Head of caudate nucleus (tissue), 42 donors: ENCODE measurements at regions of chr15 and their contacts with region 1.

Region 1: DNA sequence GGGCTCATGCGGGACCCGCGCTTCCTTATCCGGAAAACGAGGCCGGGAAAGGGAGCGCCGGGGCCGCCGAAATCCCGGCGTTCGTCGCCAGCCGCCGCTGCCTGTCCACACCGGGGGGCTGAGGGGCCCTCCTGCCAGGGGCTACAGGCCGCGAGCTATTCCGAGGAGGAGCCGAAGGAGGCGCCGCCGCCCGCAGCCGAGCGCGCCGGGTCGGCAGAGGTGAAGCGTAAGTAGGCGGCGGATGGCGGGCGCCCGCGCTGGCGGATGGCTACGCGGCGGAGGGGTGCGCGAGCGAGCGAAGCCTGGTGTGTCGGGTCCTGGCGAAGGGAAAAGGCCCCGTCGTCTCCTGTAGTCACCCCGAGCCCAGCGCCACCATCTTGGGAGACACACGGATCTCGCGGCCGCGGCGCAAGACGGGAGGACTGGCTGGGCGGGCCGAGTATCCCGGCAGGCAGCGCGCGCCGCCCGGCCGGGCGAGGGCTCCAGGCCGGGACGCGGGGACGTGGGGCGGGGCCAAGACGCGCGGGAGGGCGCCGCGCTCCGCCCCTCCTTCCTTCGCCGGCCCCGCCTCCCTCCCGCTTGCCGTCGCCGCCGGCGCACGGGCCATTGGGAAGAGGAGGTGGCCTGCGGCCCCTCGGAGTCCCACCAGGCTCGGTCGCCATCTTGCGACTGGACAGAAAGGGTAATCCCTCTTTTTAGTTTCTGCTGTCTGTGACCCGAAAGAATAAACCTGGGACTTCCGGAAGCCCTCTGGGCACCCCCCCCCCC is at the start of gene UBE3A:
- DNase-seq: peak; percentile 68 to 97 (median 92)

Region 2: DNA sequence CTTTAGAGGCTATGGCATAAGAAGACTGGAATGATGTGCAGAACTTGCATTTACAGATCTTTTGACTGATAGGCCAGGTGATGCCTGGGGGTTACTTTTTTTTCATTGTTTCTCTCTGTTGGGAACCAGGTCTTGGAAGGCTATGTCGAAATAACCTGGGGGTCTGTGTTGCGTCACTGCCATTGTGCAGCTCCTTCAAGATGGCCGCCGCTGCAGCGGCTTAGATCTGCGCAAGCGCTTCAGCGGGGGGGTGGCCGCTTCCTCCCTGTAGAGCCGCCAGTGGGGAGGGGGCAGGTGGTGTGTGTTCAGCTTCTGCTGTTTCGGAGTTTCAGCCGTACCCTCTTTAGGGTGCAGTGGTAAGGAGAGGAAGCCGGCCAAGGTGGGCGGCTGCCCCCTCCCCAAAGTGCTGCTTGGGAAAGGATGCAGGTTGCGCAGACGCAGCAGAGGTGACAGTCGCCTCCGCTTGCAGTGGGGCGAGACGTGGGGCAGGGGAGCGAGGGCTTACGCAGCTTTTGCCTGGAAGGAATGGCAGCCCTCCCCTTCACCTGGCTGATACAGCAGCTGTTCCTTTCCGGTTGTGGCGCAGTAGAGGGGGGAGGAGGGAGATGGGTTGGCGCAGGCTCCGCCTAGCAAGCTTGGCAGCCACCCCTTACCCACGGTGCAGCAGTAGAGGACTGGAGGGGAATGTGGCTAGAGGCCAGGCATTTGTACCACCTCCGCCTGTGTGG is 482.5 kb before region 1 on chr15:
- intact Hi-C with region 1: loop called (anchors 10 kb)
- DNase-seq: peak; percentile 48 to 89 (median 77)

Region 3: DNA sequence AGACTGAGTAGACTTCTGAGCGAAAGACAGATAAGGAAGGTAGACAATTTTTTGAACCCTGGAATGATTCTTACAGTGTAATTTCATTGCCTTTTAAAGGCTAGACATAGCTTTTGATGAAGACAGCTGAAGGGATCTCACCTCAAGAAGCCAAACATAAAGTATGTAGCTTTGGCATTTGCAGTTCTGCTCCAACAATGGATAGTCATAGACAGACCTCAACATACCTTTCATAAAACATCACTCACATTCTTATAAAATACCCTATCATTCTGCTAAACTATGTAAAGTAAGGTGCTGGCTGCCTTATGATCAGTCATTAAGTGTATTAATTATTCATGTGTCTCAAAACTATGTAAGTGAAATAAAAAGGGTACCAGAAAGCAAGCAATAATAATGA is 69.9 kb before region 1 on chr15:
- intact Hi-C with region 1: no loop called
- DNase-seq: no peak

Region 4: GRCh38 chr15:25450163-25450562 is 11.4 kb after region 1 on chr15:
- intact Hi-C with region 1: no loop called
- DNase-seq: no peak

Region 5: GRCh38 chr15:25469377-25469776 is 30.6 kb after region 1 on chr15:
- intact Hi-C with region 1: no loop called
- DNase-seq: no peak